Activated CD4-positive, alpha-beta memory T cell treated with anti-CD3 and anti-CD28 coated beads, Interleukin-2, amount 10 ng/mL, durations not matched to agents 7 days and 5 days (primary cell): ENCODE measurements at regions of chr2 and their contacts with region 1.

Region 1: DNA sequence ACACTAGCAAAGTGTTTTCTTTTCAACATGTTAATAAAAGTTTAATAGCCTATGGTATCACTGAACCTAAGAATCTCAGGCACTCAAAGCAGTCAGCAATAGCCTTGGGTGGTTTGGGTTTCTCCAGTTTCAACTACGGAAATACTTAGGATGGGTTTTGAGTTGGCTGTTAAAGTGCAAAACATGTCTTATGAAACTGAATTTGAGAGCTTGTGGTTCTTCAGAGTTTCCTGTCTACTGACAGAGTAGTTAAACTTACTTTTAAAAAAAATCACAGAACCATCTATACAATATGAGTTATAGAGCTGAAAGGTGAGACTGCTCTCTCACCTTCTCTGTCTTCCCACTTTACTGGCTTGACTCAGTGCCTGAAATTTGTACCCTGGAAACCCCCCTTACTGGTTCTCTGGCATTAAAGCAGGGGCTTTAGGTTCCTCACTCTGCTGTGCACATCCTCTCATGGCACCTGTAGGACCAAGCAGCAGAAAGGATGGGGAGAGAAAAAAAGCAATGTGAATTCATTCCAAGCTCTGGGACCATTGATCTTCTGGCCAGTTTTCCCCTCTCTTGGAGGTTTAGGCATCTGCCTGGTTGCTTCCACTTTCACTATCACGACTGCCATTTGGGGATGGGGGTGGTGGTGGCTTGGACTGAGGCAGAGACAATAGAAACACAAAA is 18.1 kb downstream of the CCDC141 start:
- DNase-seq: peak; percentile 22
- H3K4me3 Mint-ChIP-seq: peak overlapping the region; percentile 51
- H3K27ac Mint-ChIP-seq: peak overlapping the region; percentile 87
- H3K4me1 Mint-ChIP-seq: peaks cover 20% of the 10 kb centered on the region
- H3K27me3 Mint-ChIP-seq: no peaks in the 10 kb centered on the region

Region 2: GRCh38 chr2:179020156-179020750 is 11.6 kb before region 1 on chr2:
- CTCF ChIA-PET with region 1: interaction called, 12 read pairs
- POLR2A ChIA-PET with region 1: no interaction called
- DNase-seq: peak; percentile 42
- H3K4me3 Mint-ChIP-seq: no peak overlapping the region
- H3K27ac Mint-ChIP-seq: no peak overlapping the region
- H3K4me1 Mint-ChIP-seq: no peaks in the 10 kb centered on the region
- H3K27me3 Mint-ChIP-seq: peaks cover 2% of the 10 kb centered on the region

Region 3: GRCh38 chr2:179049546-179050311 is 17.9 kb after region 1 on chr2 and contains the start of gene CCDC141:
- CTCF ChIA-PET with region 1: interaction called, 4 read pairs
- POLR2A ChIA-PET with region 1: interaction called, 10 read pairs
- DNase-seq: peak; percentile 18
- H3K4me3 Mint-ChIP-seq: peak within 1 kb of the TSS; percentile 68
- H3K27ac Mint-ChIP-seq: peak within 1 kb of the TSS; percentile 66
- H3K4me1 Mint-ChIP-seq: peaks cover 26% of the 10 kb centered on the region
- H3K27me3 Mint-ChIP-seq: no peaks in the 10 kb centered on the region
- total RNA-seq, gene CCDC141: 2.6 TPM

Region 4: GRCh38 chr2:179218848-179219594 is 187.2 kb after region 1 on chr2:
- CTCF ChIA-PET with region 1: no interaction called
- POLR2A ChIA-PET with region 1: no interaction called
- DNase-seq: peak; percentile 53
- H3K4me3 Mint-ChIP-seq: no peak overlapping the region
- H3K27ac Mint-ChIP-seq: no peak overlapping the region
- H3K4me1 Mint-ChIP-seq: no peaks in the 10 kb centered on the region
- H3K27me3 Mint-ChIP-seq: no peaks in the 10 kb centered on the region